ENCODE measurements at regions of chr5 and their contacts with region 1.

Region 1: DNA sequence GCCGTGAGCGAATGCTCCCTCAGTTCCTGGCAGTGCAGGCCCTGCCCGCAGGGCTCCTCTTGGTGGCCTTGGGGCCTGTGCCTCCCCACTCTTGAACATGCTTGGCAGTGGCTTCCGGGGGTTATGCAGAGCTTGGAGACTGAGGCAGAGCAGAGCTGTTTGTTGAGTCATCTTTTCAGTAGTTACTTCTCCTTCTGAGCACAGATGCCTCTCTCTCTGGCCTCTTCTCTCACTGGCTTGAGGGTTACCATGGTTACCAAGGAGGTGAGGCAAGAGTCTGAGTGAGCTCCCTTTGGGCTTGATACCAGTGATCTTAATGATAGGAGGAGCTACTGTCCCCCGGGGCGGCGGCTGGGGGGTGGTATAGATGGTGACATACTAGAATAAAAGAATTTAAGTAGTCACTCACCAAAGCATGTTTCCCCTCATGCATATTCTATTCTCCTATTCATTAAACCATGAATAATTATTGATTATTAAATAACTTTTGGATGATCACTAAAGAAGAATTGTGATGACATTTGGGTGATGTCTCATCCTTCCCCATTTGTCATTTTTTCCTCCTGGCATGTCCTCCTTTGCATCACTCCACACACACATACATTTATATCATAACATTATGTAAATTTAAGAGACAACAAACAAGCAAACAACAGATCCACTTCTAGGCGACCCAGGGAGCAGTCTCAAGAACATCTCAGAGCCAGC is 111.1 kb downstream of the ARHGAP26 start:
- DNase-seq: peak; percentile 40
- CTCF ChIP-seq: no peak

Region 2: GRCh38 chr5:142611154-142611553 is 270.1 kb before region 1 on chr5:
- CTCF ChIA-PET with region 1: interaction called, 14 read pairs
- POLR2A ChIA-PET with region 1: no interaction called
- DNase-seq: peak; percentile 62
- CTCF ChIP-seq: peak; percentile 78

Region 3: DNA sequence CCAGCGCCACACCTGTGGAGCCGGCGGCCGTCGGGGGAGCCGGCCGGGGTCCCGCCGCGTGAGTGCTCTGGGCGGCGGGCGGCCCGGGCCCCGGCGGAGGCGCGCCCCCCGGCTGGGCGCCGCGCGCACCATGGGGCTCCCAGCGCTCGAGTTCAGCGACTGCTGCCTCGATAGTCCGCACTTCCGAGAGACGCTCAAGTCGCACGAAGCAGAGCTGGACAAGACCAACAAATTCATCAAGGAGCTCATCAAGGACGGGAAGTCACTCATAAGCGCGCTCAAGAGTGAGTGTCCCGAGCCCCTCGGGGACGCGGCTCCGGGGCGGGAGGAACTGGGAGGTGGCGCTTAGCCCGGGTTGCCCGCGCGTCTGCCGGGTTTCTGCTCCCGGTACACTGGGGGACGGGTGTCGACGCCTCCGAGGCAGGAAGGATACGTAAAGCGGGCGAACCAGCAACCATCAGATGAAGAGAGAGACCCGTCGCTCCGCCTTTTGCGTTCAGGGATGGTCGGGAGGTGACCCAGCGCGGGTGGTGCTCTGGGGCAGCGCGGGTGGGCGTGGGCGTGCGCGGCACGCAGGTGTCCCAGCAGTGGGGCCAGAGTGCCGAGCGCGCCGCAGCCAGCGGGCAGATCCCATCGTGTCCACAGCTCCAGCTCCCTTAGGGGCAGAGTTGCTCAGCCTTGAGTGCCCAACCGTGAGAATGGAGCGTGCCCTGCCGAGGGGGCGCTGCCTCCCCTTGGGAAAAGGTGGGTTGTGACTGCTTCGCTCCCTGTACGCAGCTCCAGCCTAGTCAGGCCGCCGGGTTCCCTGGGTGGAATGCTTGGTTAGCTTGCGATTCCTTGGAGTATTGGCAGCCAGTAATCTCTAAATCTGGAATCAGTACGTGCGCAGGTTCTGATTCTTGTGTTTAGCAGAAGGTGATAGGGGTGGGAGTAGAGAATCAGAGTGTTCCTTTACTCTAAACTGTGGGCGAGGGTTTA is 110.3 kb before region 1 on chr5:
- CTCF ChIA-PET with region 1: no interaction called
- POLR2A ChIA-PET with region 1: no interaction called
- DNase-seq: peak; percentile 40
- CTCF ChIP-seq: no peak

Region 4: DNA sequence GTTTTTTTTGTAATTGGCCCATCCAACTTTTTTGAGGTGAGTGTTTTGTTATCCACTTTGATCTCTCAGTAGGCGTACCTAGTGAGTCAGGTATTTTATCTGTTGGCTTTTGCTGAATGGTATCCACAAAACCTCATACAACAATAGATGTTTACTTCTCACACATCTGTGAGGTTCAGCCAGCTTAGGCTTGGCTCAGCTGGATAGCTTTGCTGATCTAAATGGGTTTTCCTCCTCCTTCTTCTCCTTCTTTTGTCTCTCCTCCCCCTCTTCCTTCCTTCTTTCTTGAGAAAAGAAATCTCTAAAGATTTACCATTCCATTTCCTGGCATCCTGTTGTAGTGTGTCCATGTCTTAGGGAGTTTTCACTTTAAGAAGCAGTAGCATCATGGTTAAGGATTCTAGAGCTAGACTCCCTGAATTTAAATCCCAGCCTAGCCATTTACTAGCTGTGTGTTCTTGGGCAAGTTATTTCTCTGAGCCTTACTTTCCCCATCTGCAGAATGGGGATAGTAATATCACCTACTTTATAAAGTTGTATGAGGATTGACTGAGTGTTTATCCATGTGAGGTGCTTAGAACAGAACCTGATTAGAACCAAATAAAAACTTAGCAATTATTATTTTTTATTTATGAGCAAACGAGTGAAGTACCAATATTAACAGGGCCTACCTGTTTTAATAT is 15.2 kb after region 1 on chr5:
- CTCF ChIA-PET with region 1: interaction called, 24 read pairs
- POLR2A ChIA-PET with region 1: no interaction called
- DNase-seq: no peak
- CTCF ChIP-seq: no peak

Measured in GM10248 (cell line).